CD8-positive, alpha-beta T cell (primary cell): ENCODE measurements at regions of chr19 and their contacts with region 1.

Region 1: GRCh38 chr19:37077934-37078725 is at the start of gene ZNF420:
- DNase-seq: peak; percentile 78 to 96 (median 89)
- ATAC-seq: peak; percentile 88
- H3K4me3 ChIP-seq: peak within 1 kb of the TSS; percentile 60 to 71
- H3K4me3 Mint-ChIP-seq: peak within 1 kb of the TSS; percentile 89
- H3K27ac ChIP-seq: peak within 1 kb of the TSS; percentile 56 to 82
- H3K27ac Mint-ChIP-seq: peak within 1 kb of the TSS; percentile 92
- H3K4me1 ChIP-seq: peaks cover 9% of the 10 kb centered on the region
- H3K4me1 Mint-ChIP-seq: peaks cover 34% of the 10 kb centered on the region
- H3K27me3 ChIP-seq: no peaks in the 10 kb centered on the region
- H3K27me3 Mint-ChIP-seq: no peaks in the 10 kb centered on the region
- CTCF ChIP-seq: no peak
- total RNA-seq, gene ZNF420: 7.0 to 8.9 TPM

Region 2: DNA sequence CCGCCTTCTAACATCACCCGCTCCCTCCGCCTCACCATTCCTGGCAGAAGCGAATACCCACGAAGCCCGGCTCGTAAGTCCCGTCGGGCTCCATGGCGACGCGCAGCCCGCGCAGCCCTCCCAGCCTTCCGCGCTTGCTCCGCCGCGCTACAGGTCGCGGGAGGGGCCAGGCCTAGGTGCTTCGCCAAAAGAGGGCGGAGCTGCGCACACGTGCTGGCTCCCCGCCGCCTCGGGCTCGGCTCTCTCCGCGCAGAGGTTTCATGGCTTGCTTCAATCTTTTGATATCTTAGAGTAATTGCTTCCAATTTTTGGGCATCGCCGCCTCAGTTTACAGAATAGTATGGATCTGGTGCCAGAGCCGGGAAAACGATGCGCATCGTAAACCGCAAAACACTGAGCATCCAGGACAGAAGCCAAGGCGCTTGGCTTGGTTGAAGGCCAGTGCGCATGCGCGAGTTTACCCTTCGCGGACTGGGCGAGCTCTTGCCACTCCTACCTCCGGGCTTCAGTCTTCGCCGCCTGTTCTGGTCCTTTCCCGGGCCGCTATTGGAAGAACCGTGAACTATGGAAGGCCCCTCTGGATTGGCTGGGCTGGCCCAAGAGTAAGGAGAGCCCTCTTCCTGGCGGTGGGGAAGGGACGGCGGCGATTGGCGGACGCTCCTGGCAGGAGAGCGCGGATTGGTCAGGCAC is 963.2 kb before region 1 on chr19 and contains the start of gene POLR2I:
- CTCF ChIA-PET with region 1: no interaction called
- POLR2A ChIA-PET with region 1: no interaction called
- intact Hi-C with region 1: loop called in 1 of 2 experiments (anchors 10 kb)
- DNase-seq: peak; percentile 96 to 100 (median 99)
- ATAC-seq: peak; percentile 85
- H3K4me3 ChIP-seq: peak within 1 kb of the TSS; percentile 71 to 73
- H3K4me3 Mint-ChIP-seq: peak within 1 kb of the TSS; percentile 92
- H3K27ac ChIP-seq: peak within 1 kb of the TSS; percentile 77 to 92
- H3K27ac Mint-ChIP-seq: peak within 1 kb of the TSS; percentile 97
- H3K4me1 ChIP-seq: peaks cover 18% of the 10 kb centered on the region
- H3K4me1 Mint-ChIP-seq: peaks cover 39% of the 10 kb centered on the region
- H3K27me3 ChIP-seq: no peaks in the 10 kb centered on the region
- H3K27me3 Mint-ChIP-seq: no peaks in the 10 kb centered on the region
- CTCF ChIP-seq: no peak
- total RNA-seq, gene POLR2I: 27.4 to 34.7 TPM

Region 3: DNA sequence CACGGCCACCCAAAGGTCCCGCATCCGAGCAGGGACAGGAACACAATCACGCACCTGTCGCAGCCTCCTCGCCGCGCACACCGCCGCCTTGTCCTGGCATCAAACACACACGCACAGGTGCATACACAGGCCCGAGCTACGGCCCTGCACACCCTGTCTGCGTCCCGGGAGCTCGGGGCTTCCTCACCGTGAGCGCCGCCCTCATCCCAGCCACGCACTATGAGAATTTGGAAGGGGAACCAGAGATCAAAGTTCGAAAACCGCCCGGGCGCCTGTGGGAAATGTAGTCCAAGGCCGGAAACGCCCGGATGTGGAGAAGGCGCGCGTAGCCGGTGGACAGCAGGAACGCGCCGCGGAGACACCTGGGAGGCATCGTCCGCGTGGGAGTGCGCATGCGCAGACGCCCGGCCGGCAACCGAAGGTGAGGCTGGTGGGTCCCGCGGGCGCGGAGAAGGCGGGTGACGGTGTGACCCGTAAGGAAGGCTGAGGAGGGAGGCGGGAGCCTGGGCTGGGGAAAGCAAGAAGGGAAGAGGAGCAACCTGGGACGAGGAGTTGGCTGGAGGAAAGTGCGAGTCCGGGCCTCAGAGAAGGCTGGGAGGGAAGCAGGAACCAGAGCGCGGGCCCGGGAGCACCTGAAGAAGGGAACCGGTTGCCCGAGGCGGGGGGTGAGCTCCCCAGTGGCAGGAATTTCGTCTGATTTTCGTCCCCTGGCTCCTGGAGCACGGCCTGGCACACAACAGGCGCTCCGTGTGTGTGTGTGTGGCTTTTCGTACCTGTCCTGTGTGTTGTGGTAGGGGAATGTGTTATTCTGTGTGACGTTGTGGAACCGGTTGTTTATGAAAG is 390.7 kb before region 1 on chr19 and contains the start of gene ZNF567:
- CTCF ChIA-PET with region 1: no interaction called
- POLR2A ChIA-PET with region 1: no interaction called
- intact Hi-C with region 1: loop called (anchors 1 to 5 kb)
- DNase-seq: peak; percentile 91 to 99 (median 98)
- ATAC-seq: peak; percentile 91
- H3K4me3 ChIP-seq: peak within 1 kb of the TSS; percentile 82 to 87
- H3K4me3 Mint-ChIP-seq: peak within 1 kb of the TSS; percentile 99
- H3K27ac ChIP-seq: peak within 1 kb of the TSS; percentile 71 to 81
- H3K27ac Mint-ChIP-seq: peak within 1 kb of the TSS; percentile 96
- H3K4me1 ChIP-seq: peaks cover 18% of the 10 kb centered on the region
- H3K4me1 Mint-ChIP-seq: peaks cover 35% of the 10 kb centered on the region
- H3K27me3 ChIP-seq: no peaks in the 10 kb centered on the region
- H3K27me3 Mint-ChIP-seq: no peaks in the 10 kb centered on the region
- CTCF ChIP-seq: no peak
- total RNA-seq, gene ZNF567: 10.7 to 11.1 TPM

Region 4: GRCh38 chr19:36915992-36916830 is 161.9 kb before region 1 on chr19 and contains the starts of genes ZNF568 and ZNF829:
- CTCF ChIA-PET with region 1: no interaction called
- POLR2A ChIA-PET with region 1: interaction called, 3 read pairs
- intact Hi-C with region 1: loop called (anchors 1 to 2 kb)
- DNase-seq: peak; percentile 82 to 97 (median 92)
- ATAC-seq: peak; percentile 97
- H3K4me3 ChIP-seq: peak within 1 kb of the TSS; percentile 75 to 79
- H3K4me3 Mint-ChIP-seq: peak within 1 kb of the TSS; percentile 89
- H3K27ac ChIP-seq: peak within 1 kb of the TSS; percentile 80 to 95
- H3K27ac Mint-ChIP-seq: peak within 1 kb of the TSS; percentile 95
- H3K4me1 ChIP-seq: peaks cover 10% of the 10 kb centered on the region
- H3K4me1 Mint-ChIP-seq: peaks cover 36% of the 10 kb centered on the region
- H3K27me3 ChIP-seq: no peaks in the 10 kb centered on the region
- H3K27me3 Mint-ChIP-seq: no peaks in the 10 kb centered on the region
- CTCF ChIP-seq: peak; percentile 91
- total RNA-seq, gene ZNF568: 4.6 to 5.5 TPM
- total RNA-seq, gene ZNF829: 6.1 to 6.2 TPM

Region 5: GRCh38 chr19:36997152-36997842 is 80.8 kb before region 1 on chr19:
- CTCF ChIA-PET with region 1: no interaction called
- POLR2A ChIA-PET with region 1: no interaction called
- intact Hi-C with region 1: no loop called
- DNase-seq: no peak
- ATAC-seq: no peak
- H3K4me3 ChIP-seq: no peak overlapping the region
- H3K4me3 Mint-ChIP-seq: no peak overlapping the region
- H3K27ac ChIP-seq: no peak overlapping the region
- H3K27ac Mint-ChIP-seq: no peak overlapping the region
- H3K4me1 ChIP-seq: no peaks in the 10 kb centered on the region
- H3K4me1 Mint-ChIP-seq: no peaks in the 10 kb centered on the region
- H3K27me3 ChIP-seq: no peaks in the 10 kb centered on the region
- H3K27me3 Mint-ChIP-seq: no peaks in the 10 kb centered on the region
- CTCF ChIP-seq: no peak

Region 6: GRCh38 chr19:37217855-37218591 is 139.9 kb after region 1 on chr19 and contains the start of gene ZNF383:
- CTCF ChIA-PET with region 1: no interaction called
- POLR2A ChIA-PET with region 1: interaction called, 6 read pairs
- intact Hi-C with region 1: loop called (anchors 1 kb)
- DNase-seq: peak; percentile 68 to 92 (median 82)
- ATAC-seq: peak; percentile 88
- H3K4me3 ChIP-seq: peak within 1 kb of the TSS; percentile 71 to 92
- H3K4me3 Mint-ChIP-seq: peak within 1 kb of the TSS; percentile 87
- H3K27ac ChIP-seq: peak within 1 kb of the TSS; percentile 69 to 92
- H3K27ac Mint-ChIP-seq: peak within 1 kb of the TSS; percentile 93
- H3K4me1 ChIP-seq: peaks cover 11% of the 10 kb centered on the region
- H3K4me1 Mint-ChIP-seq: peaks cover 31% of the 10 kb centered on the region
- H3K27me3 ChIP-seq: no peaks in the 10 kb centered on the region
- H3K27me3 Mint-ChIP-seq: no peaks in the 10 kb centered on the region
- CTCF ChIP-seq: no peak
- total RNA-seq, gene ZNF383: 17.5 to 18.9 TPM

Region 7: DNA sequence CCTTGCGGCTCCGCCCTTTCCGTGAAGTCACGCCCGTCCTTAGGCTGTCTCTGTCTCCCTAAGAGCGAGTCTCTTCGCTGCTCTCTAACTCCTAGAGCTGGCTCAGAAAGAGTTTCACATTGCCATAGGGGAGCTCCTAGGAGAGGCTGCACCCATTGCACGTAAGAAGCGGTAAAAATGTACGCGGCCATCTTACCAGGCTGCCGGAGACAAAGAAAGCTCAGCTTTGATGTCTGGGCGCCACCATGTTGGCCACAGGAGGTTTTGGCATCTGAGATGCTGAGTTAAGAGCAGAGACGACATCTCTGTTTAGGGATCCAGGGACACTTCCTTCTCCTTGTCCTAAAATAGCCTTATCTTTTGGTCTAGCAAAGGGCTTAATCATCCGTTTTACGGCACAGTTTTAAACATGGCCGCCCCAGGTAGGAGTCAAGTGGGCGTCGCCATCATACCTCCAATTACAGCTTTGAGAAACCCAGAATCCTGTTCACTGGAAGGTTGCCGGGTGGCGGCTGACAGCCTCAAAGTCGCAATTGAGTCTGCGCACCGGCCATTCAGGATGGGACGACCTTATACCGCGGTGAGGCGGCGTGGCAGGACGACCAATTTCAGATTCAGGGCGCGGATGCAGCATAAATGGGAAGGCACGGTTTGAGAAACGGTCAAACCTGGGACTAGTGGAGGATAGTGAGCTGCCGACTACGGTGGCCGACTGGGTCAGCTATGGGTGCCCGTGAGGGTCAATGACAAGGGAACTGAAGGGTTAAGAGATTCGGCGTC is 428.4 kb after region 1 on chr19 and contains the start of gene ZNF793:
- CTCF ChIA-PET with region 1: no interaction called
- POLR2A ChIA-PET with region 1: interaction called, 4 read pairs
- intact Hi-C with region 1: loop called in 1 of 2 experiments (anchors 1 kb)
- DNase-seq: peak; percentile 53 to 89 (median 83)
- ATAC-seq: peak; percentile 87
- H3K4me3 ChIP-seq: peak within 1 kb of the TSS; percentile 82 to 86
- H3K4me3 Mint-ChIP-seq: no peak within 1 kb of the TSS
- H3K27ac ChIP-seq: peak within 1 kb of the TSS; percentile 94 to 97
- H3K27ac Mint-ChIP-seq: no peak within 1 kb of the TSS
- H3K4me1 ChIP-seq: peaks cover 16% of the 10 kb centered on the region
- H3K4me1 Mint-ChIP-seq: no peaks in the 10 kb centered on the region
- H3K27me3 ChIP-seq: no peaks in the 10 kb centered on the region
- H3K27me3 Mint-ChIP-seq: no peaks in the 10 kb centered on the region
- CTCF ChIP-seq: no peak
- total RNA-seq, gene ZNF793: 2.4 to 3.3 TPM